HCT116 (cell line): ENCODE measurements at regions of chr6 and their contacts with region 1.

Region 1: GRCh38 chr6:33248925-33249731 is 22.5 kb downstream of the VPS52 start:
- DNase-seq: peak; percentile 99
- ATAC-seq: peak; percentile 91
- H3K4me3 ChIP-seq: peak overlapping the region; percentile 74 to 85
- H3K27ac ChIP-seq: peak overlapping the region; percentile 90
- H3K4me1 ChIP-seq: peaks cover 16 to 37% of the 10 kb centered on the region in 2 experiments
- H3K27me3 ChIP-seq: no peaks in the 10 kb centered on the region
- CTCF ChIP-seq: no peak
- POLR2A ChIP-seq: peak; percentile 65
- RAD21 ChIP-seq: no peak

Region 2: GRCh38 chr6:33000055-33000454 is 249.1 kb before region 1 on chr6:
- CTCF ChIA-PET with region 1: no interaction called
- POLR2A ChIA-PET with region 1: interaction called, 3 read pairs
- RAD21 ChIA-PET with region 1: no interaction called
- intact Hi-C with region 1: loop called (anchors 1 kb)
- DNase-seq: peak; percentile 66
- ATAC-seq: peak; percentile 96
- H3K4me3 ChIP-seq: no peak overlapping the region
- H3K27ac ChIP-seq: no peak overlapping the region
- H3K4me1 ChIP-seq: 0 out of 4 replicates have a peak, but pooled peaks cover 0 to 5% of the 10 kb centered on the region in 2 experiments
- H3K27me3 ChIP-seq: no peaks in the 10 kb centered on the region
- CTCF ChIP-seq: peak; percentile 53 to 70 (median 63); a peak in 5 of 6 replicates
- POLR2A ChIP-seq: no peak
- RAD21 ChIP-seq: peak; percentile 86

Region 3: DNA sequence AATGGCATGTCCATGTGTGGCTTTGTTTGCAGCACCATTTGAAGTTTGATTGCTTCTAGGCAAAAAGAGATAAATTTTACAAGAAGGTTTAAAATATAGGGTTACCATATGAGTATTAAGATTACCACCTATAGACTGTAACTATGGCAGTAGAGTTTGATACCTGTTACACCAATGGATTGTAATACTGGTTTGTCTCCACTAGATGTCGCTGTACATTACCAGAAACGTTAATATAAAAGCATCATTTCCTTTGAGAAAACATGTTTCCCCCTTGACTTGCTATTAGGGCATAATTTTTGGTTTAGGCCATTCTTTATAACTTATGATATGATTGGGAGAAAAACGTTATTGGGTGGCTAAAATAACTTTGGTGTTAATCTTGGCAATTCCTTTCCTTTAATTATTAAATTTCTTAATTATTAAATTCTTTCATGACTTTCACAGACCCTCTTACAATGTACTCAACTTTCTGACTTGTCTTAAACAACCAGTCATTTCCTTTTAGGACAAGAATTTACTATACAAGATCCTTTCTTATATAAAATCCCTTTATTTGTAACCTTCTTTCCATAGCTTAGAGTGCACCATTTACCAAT is 130.5 kb before region 1 on chr6:
- CTCF ChIA-PET with region 1: interaction called, 49 read pairs
- POLR2A ChIA-PET with region 1: no interaction called
- RAD21 ChIA-PET with region 1: no interaction called
- intact Hi-C with region 1: loop called (anchors 1 kb)
- DNase-seq: peak; percentile 46
- ATAC-seq: peak; percentile 70
- H3K4me3 ChIP-seq: no peak overlapping the region
- H3K27ac ChIP-seq: no peak overlapping the region
- H3K4me1 ChIP-seq: peaks cover 0 to 4% of the 10 kb centered on the region in 2 experiments; a peak in 1 of 4 replicates
- H3K27me3 ChIP-seq: peaks cover 14% of the 10 kb centered on the region; the same call in 1 of the 2 replicates
- CTCF ChIP-seq: peak; percentile 60 to 84 (median 74)
- POLR2A ChIP-seq: no peak
- RAD21 ChIP-seq: peak; percentile 70

Region 4: DNA sequence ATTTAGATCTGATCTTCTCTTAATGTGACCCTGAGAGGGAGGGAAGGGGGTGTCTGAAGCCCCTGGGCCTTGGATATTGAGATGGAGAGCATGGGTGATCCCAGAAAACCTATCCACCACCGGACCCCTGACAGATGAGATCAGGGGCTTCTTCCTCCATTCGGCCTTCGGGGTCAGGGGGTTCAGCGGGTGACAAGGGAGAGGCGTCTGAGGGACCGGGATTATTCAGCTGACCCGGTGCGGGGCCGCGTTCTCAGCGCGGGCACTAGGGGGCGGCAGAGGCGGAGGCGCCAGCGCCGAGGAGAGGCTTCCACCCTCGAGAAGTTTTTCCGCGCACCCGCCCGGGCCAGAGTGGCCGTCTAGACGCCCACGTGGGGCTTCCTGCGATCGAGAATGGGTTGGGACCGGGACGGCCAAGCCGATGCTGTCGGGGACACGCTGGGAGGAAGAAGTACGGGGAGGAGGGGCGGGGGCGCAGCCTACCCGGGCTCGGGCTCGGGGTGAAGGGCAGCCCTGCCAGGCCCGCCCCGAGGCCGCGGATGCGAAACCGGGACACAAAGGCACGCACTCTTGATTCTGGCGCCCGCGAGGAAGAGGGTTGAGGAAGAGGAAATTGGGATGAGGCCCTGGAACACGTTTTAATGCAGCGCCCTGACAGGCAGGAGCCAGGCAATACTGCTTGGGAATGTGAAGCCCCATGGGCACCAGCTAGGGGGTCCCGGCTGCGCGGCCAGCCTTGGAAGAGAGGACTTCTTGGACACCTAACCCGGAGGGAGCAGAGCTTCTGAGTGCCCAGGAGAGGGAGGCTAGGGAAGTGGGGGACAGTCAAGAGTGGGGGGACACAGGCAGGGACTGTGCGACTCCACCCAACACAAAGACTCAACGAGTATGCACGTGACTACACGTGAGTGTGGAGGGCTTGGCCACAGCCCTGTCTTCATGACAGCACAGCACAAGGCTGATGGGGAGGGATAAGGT is 87.5 kb before region 1 on chr6:
- CTCF ChIA-PET with region 1: interaction called, 10 read pairs
- POLR2A ChIA-PET with region 1: no interaction called
- RAD21 ChIA-PET with region 1: interaction called, 6 read pairs
- intact Hi-C with region 1: loop called (anchors 1 kb)
- DNase-seq: peak; percentile 18
- ATAC-seq: peak; percentile 89
- H3K4me3 ChIP-seq: peak overlapping the region; percentile 52 to 61
- H3K27ac ChIP-seq: peak overlapping the region; percentile 40
- H3K4me1 ChIP-seq: peaks cover 11 to 29% of the 10 kb centered on the region in 2 experiments
- H3K27me3 ChIP-seq: no peaks in the 10 kb centered on the region
- CTCF ChIP-seq: peak; percentile 72 to 91 (median 90); a peak in 5 of 6 replicates
- POLR2A ChIP-seq: peak; percentile 17
- RAD21 ChIP-seq: peak; percentile 68

Region 5: DNA sequence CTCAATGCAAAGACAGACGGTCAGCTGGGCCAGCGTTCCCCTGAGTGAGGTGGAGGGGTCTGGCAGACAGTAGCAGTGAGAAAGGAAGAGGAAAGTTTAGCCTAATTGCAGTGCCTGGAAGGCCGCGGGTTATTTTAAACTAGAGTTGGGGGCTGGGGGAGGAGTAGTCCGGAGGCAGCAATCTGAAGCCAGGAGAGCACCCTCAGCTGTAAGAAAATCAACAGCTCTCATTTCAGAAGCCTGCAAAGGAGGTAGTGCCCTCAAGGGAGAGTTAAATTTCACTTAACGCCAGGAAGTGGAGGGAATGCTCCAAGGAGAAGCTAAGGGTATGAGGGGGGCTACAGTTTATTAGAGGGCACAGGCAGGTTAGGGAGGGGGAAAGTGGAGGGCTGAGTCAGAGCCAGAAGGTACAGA is 13.9 kb before region 1 on chr6:
- CTCF ChIA-PET with region 1: interaction called, 12 read pairs
- POLR2A ChIA-PET with region 1: interaction called, 4 read pairs
- RAD21 ChIA-PET with region 1: no interaction called
- intact Hi-C with region 1: no loop called
- DNase-seq: no peak
- ATAC-seq: no peak
- H3K4me3 ChIP-seq: no peak overlapping the region
- H3K27ac ChIP-seq: no peak overlapping the region
- H3K4me1 ChIP-seq: no peaks in the 10 kb centered on the region
- H3K27me3 ChIP-seq: no peaks in the 10 kb centered on the region; the same call in 1 of the 2 replicates
- CTCF ChIP-seq: no peak
- POLR2A ChIP-seq: no peak
- RAD21 ChIP-seq: no peak

Region 6: GRCh38 chr6:33271458-33272274 is 22.5 kb after region 1 on chr6 and contains the starts of genes RPS18 and VPS52:
- CTCF ChIA-PET with region 1: interaction called, 3 read pairs
- POLR2A ChIA-PET with region 1: interaction called, 24 read pairs
- RAD21 ChIA-PET with region 1: no interaction called
- intact Hi-C with region 1: no loop called
- DNase-seq: peak; percentile 99
- ATAC-seq: peak; percentile 76
- H3K4me3 ChIP-seq: peak within 1 kb of the TSS; percentile 75 to 99
- H3K27ac ChIP-seq: peak within 1 kb of the TSS; percentile 82
- H3K4me1 ChIP-seq: peaks cover 32 to 47% of the 10 kb centered on the region in 2 experiments
- H3K27me3 ChIP-seq: no peaks in the 10 kb centered on the region
- CTCF ChIP-seq: no peak
- POLR2A ChIP-seq: peak; percentile 98
- RAD21 ChIP-seq: no peak
- total RNA-seq, gene RPS18: 4,062 TPM
- total RNA-seq, gene VPS52: 58.2 TPM